Transverse colon (tissue), 4 donors: ENCODE measurements at regions of chr5 and their contacts with region 1.

Region 1: DNA sequence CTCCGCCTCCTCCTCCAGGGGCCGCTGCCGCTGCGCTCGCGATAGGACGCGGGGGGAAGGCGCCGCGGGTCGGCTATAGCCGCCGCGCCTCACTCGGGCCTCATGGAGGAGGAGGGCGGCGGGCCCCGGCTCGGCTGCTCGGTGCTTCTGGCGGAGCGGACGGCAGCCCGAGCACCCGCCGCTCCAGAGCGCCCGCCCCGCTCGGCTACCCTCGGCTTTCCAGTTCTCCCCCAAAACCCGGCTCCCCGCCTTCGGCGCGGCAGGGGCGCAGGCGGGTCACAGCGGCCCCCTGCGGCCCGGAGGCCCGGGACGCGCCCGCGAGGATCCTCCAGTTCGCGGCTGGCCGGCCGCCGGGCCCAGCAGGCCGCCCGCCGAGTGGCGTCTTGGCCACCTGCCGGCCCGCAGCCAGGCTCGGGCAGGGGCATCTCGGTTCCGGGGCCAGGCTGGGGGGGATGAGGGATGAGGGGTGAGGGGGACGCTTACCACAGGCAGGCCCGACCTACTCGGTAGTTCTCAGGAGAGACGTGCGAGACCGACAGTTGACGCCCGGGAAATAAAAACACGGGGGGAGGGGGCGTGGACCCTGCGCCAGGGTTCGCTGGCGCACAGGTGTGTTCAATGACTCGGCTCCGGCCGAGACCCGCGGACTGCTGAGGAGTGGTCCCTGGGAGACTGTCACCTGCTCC is at the start of gene PAIP1:
- DNase-seq: peak; percentile 83
- H3K4me3 ChIP-seq: peak within 1 kb of the TSS; percentile 73 to 94 (median 86)
- H3K27ac ChIP-seq: peak within 1 kb of the TSS; percentile 96 to 99 (median 97)
- H3K4me1 ChIP-seq: peaks cover 20 to 44% (median 24%) of the 10 kb centered on the region in 4 donors
- H3K27me3 ChIP-seq: no peaks in the 10 kb centered on the region
- CTCF ChIP-seq: peak in 4 of 5 experiments; percentile 53 to 65 (median 58)
- EP300 ChIP-seq: no peak
- POLR2A ChIP-seq: peak; percentile 74
- total RNA-seq, gene PAIP1: 17.1 to 61.4 (median 46.3) TPM

Region 2: GRCh38 chr5:42321785-42322184 is 1235.2 kb before region 1 on chr5:
- in situ Hi-C with region 1: no loop called
- intact Hi-C with region 1: no loop called
- DNase-seq: no peak
- H3K4me3 ChIP-seq: no peak overlapping the region
- H3K27ac ChIP-seq: no peak overlapping the region
- H3K4me1 ChIP-seq: no peaks in the 10 kb centered on the region
- H3K27me3 ChIP-seq: no peaks in the 10 kb centered on the region
- CTCF ChIP-seq: no peak
- EP300 ChIP-seq: no peak
- POLR2A ChIP-seq: no peak

Region 3: GRCh38 chr5:43602461-43603343 is 45.7 kb after region 1 on chr5 and contains the start of gene NNT:
- in situ Hi-C with region 1: no loop called
- intact Hi-C with region 1: loop called (anchors 10 kb)
- DNase-seq: peak; percentile 84
- H3K4me3 ChIP-seq: peak within 1 kb of the TSS; percentile 78 to 92 (median 81)
- H3K27ac ChIP-seq: peak within 1 kb of the TSS; percentile 88 to 93 (median 90)
- H3K4me1 ChIP-seq: peaks cover 0 to 27% (median 13%) of the 10 kb centered on the region in 4 donors
- H3K27me3 ChIP-seq: no peaks in the 10 kb centered on the region
- CTCF ChIP-seq: no peak
- EP300 ChIP-seq: no peak
- POLR2A ChIP-seq: peak; percentile 25
- total RNA-seq, gene NNT: 21.9 to 93.0 (median 48.8) TPM

Region 4: GRCh38 chr5:43729846-43730478 is 173.0 kb after region 1 on chr5:
- in situ Hi-C with region 1: no loop called
- intact Hi-C with region 1: no loop called
- DNase-seq: no peak
- H3K4me3 ChIP-seq: no peak overlapping the region
- H3K27ac ChIP-seq: no peak overlapping the region
- H3K4me1 ChIP-seq: no peaks in the 10 kb centered on the region
- H3K27me3 ChIP-seq: no peaks in the 10 kb centered on the region
- CTCF ChIP-seq: peak; percentile 26 to 49 (median 42)
- EP300 ChIP-seq: no peak
- POLR2A ChIP-seq: no peak